ENCODE measurements at regions of chr19 and their contacts with region 1.

Region 1: DNA sequence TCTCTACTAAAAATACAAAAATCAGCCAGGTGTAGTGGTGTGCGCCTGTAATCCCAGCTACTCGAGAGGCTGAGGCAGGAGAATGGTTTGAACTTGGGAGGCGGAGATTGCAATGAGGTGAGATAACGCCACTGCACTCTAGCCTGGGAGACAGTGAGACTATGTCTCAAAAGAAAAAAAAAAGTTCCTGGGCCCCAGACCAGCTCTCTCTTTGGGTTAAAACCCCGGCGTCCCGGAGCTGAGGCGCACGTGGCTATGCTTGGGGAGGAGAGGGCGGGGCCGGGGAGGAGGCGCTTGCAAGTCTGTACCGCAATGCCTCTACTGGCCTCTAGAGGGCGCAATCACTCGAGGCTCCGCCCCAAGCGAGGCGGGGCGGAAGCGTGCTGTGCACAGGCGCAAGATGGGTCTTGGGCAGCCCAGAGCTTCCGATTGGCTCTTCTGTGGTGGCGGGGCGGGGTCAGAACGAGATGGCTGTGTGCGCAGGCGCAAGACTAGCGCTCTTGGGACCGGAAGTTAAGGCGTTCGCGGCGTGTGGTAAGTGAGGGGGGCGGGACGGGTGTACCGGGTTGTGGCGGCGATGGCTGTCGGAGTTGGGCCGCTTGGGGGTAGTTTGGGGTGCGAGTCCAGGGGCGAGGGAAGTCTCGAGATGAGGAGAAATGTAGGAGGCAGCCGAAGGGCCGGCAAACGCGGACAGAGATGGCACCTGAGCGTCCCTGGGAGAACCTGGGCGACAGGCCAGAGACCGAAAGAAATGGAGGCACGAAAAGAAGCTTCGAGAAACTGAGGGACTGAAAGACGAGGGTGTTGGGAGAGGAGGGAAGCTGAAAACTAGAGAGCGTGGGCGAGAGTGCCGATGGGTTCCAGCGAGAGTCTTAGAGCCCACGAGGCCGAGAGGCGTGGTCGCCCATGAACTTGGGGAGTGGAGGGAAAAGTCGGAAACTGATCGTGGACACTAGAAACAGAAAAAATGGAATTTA is at the start of gene DHX34:
- DNase-seq: peak; percentile 98
- ATAC-seq: peak; percentile 96
- H3K4me3 ChIP-seq: peak within 1 kb of the TSS; percentile 70 to 85
- H3K27ac ChIP-seq: peak within 1 kb of the TSS; percentile 71
- H3K4me1 ChIP-seq: peaks cover 15 to 22% of the 10 kb centered on the region in 2 experiments; a peak in 3 of 4 replicates
- H3K27me3 ChIP-seq: no peaks in the 10 kb centered on the region
- CTCF ChIP-seq: peak; percentile 69 to 98 (median 97)
- POLR2A ChIP-seq: peak; percentile 74
- RAD21 ChIP-seq: no peak
- total RNA-seq, gene DHX34: 30.5 TPM

Region 2: DNA sequence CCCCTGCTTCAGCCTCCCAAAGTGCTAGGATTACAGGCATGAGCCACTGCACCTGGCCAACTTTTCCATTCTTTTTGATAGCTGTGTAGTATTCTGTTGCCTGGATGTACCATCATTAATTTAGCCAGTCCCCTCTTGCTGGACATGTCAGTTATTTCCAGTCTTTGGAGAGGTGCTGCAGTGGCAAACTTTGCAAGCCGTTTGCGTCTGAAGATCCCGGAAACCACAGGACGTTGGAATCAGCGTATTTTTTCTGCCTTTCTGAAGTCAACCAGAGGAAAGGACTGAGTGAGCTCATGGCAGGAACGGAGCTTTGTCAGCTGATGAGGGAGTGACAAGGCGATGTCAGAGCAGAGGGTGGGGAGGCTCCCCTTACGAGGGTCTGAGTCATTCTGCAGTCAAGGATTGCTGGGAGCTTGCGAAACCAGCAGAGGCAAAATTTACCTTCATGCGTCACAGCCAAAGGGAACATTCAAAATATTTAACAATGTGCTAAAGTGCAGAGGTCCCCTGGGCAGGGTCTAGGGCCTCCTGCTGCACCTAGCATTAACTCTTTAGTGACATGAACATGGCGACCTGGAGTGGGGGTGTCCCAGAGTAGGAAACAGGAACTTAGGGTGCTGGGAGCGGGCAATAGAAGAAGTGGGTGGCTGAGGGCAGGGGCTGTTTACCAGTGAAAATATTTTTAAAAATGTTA is 33.8 kb before region 1 on chr19:
- CTCF ChIA-PET with region 1: interaction called, 23 read pairs
- POLR2A ChIA-PET with region 1: interaction called, 5 read pairs
- RAD21 ChIA-PET with region 1: no interaction called
- intact Hi-C with region 1: loop called (anchors 1 kb)
- DNase-seq: peak; percentile 87
- ATAC-seq: peak; percentile 90
- H3K4me3 ChIP-seq: no peak overlapping the region
- H3K27ac ChIP-seq: no peak overlapping the region
- H3K4me1 ChIP-seq: peaks cover 12 to 21% of the 10 kb centered on the region in 2 experiments
- H3K27me3 ChIP-seq: no peaks in the 10 kb centered on the region
- CTCF ChIP-seq: no peak
- POLR2A ChIP-seq: no peak
- RAD21 ChIP-seq: no peak

Region 3: DNA sequence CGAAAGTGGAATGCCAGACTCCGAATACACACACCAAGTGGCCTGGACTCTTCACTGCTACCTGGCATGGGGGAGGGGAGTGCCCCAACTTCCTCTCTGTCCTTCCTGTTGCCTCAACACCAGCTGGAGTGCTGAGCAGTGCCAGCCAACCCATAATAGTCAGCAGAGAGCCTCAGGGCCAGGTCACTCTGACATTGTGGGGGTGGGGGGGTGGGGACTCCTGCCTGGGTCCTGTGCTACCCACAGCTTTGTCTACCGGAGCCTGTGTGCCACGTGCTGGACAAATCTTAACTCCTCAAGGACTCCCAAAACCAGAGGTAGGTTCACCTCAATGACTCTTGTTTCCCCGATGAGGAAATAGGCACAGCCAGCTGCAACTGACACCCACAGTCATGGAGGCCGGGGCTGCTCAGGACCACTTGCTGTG is 12.2 kb before region 1 on chr19:
- CTCF ChIA-PET with region 1: interaction called, 21 read pairs
- POLR2A ChIA-PET with region 1: interaction called, 3 read pairs
- RAD21 ChIA-PET with region 1: no interaction called
- intact Hi-C with region 1: no loop called
- DNase-seq: no peak
- ATAC-seq: peak; percentile 36
- H3K4me3 ChIP-seq: no peak overlapping the region
- H3K27ac ChIP-seq: no peak overlapping the region
- H3K4me1 ChIP-seq: peaks cover 4 to 9% of the 10 kb centered on the region in 2 experiments
- H3K27me3 ChIP-seq: no peaks in the 10 kb centered on the region
- CTCF ChIP-seq: no peak
- POLR2A ChIP-seq: no peak
- RAD21 ChIP-seq: no peak

Region 4: DNA sequence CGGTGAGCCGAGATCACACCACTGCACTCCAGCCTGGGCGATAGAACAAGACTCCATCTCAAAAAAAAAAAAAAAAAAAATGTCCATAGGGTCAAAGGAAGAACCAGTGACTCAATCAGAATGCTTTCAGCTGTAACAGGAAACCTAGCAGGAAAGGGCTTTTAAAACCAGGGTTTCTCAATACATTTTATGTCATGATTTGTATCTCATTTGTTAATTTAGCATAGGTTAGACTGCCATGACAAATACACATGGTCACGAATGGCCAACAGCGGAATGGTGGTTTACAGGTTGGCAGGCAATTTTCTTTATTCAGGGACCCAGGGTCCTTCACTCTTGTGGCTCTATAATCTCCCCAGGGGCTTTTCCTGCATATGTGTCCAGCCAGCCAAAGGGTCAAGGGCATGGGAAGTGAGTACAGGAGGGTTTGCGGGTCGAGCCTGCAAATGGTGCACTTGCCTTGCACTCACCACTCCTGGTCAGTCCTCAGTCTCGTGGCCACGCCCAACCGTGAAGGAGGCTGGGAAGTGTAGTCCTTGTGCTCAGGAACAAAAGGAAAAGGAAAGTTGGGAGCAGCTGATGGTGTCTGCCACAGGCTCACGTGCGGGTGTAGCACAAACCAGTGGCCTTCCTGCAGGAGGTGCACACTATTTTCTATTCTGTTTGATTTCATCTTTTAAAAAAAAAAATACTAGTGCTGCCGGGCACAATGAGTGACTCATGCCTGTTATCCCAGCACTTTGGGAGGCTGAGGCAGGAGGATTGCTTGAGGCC is 14.8 kb after region 1 on chr19:
- CTCF ChIA-PET with region 1: interaction called, 12 read pairs
- POLR2A ChIA-PET with region 1: no interaction called
- RAD21 ChIA-PET with region 1: no interaction called
- intact Hi-C with region 1: no loop called
- DNase-seq: no peak
- ATAC-seq: peak; percentile 76
- H3K4me3 ChIP-seq: no peak overlapping the region
- H3K27ac ChIP-seq: no peak overlapping the region
- H3K4me1 ChIP-seq: no peaks in the 10 kb centered on the region
- H3K27me3 ChIP-seq: no peaks in the 10 kb centered on the region
- CTCF ChIP-seq: no peak
- POLR2A ChIP-seq: no peak
- RAD21 ChIP-seq: no peak

Region 5: GRCh38 chr19:47494729-47495128 is 145.6 kb after region 1 on chr19:
- CTCF ChIA-PET with region 1: no interaction called
- POLR2A ChIA-PET with region 1: no interaction called
- RAD21 ChIA-PET with region 1: no interaction called
- intact Hi-C with region 1: no loop called
- DNase-seq: no peak
- ATAC-seq: no peak
- H3K4me3 ChIP-seq: no peak overlapping the region
- H3K27ac ChIP-seq: no peak overlapping the region
- H3K4me1 ChIP-seq: no peaks in the 10 kb centered on the region
- H3K27me3 ChIP-seq: no peaks in the 10 kb centered on the region
- CTCF ChIP-seq: no peak
- POLR2A ChIP-seq: no peak
- RAD21 ChIP-seq: no peak

Region 6: GRCh38 chr19:47514869-47515588 is 165.9 kb after region 1 on chr19 and contains the start of gene NAPA:
- CTCF ChIA-PET with region 1: no interaction called
- POLR2A ChIA-PET with region 1: no interaction called
- RAD21 ChIA-PET with region 1: no interaction called
- intact Hi-C with region 1: no loop called
- DNase-seq: peak; percentile 99
- ATAC-seq: peak; percentile 95
- H3K4me3 ChIP-seq: peak within 1 kb of the TSS; percentile 88 to 100
- H3K27ac ChIP-seq: peak within 1 kb of the TSS; percentile 64
- H3K4me1 ChIP-seq: peaks cover 8 to 26% of the 10 kb centered on the region in 2 experiments; a peak in 3 of 4 replicates
- H3K27me3 ChIP-seq: no peaks in the 10 kb centered on the region
- CTCF ChIP-seq: no peak
- POLR2A ChIP-seq: no peak
- RAD21 ChIP-seq: no peak; the same call in 1 of the 2 replicates
- total RNA-seq, gene NAPA: 58.8 TPM

Measured in HCT116 (cell line).